ENCODE measurements at regions of chr2 and their contacts with region 1.

Region 1: GRCh38 chr2:174985630-174986029 is 19.6 kb downstream of the CHN1 start:
- ATAC-seq: peak in 3 of 8 experiments; percentile 14 to 51 (median 32)
- H3K4me3 ChIP-seq: peak overlapping the region in 1 of 5 donors; percentile 11
- H3K27ac ChIP-seq: no peak overlapping the region
- H3K4me1 ChIP-seq: peaks cover 3 to 25% of the 10 kb centered on the region in 2 donors

Region 2: DNA sequence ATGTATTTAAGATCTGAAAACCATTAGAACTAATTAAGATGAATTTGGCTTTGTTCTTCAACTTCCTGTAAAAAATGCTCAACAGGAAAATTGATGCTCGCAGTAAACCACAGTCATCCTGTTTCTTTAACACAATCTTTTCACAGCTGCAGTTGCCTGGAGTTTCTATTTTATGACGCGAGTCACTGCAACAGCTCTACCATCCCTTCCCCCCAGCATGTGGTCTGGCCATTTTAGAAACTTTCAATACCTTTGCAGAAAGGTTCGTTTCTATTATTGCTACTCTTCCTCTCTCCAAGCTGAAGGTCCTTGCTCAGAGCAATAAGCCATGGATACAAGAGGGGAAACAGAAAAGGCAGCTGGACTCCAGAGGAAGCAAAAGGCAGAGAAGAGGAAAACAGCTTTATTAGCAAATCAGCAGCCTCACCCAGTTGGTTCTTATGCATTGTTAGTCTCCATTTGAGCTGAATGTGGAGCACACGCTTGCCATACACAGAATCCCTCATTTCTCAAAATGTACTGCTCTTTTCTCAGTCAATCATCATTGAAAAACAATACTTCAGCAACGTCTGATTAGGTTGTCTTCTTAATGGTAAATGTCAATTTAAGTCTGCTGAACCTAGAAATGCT is 391.9 kb before region 1 on chr2:
- in situ Hi-C with region 1: loop called in 1 of 9 experiments (anchors 25 kb)
- ATAC-seq: peak; percentile 42 to 90 (median 58)
- H3K4me3 ChIP-seq: no peak overlapping the region
- H3K27ac ChIP-seq: peak overlapping the region in 1 of 2 donors; percentile 39
- H3K4me1 ChIP-seq: peaks cover 10 to 16% of the 10 kb centered on the region in 2 donors

Region 3: DNA sequence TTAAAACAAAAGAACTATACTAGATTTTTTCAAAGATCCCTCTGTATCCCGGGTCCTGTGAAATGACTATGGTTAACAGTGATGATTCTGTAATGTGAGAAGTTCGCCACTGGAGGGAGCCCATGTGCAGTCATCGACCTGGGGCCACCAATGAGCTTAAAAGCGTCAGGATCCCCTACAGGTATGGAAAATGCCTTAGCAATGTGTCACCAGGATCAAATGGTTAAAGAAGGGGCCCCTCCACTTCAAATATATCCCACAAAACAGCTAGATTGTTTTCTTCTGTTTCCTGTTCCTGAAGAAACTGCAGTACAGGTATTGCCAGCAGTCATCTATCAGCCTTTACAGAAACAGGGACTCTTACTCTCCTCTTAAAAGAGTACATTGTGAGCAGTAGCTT is 236.7 kb before region 1 on chr2:
- in situ Hi-C with region 1: loop called in 6 of 9 experiments (anchors 10 to 25 kb)
- ATAC-seq: peak; percentile 67 to 96 (median 80)
- H3K4me3 ChIP-seq: no peak overlapping the region
- H3K27ac ChIP-seq: no peak overlapping the region
- H3K4me1 ChIP-seq: peaks cover 0 to 2% of the 10 kb centered on the region in 2 donors

Region 4: DNA sequence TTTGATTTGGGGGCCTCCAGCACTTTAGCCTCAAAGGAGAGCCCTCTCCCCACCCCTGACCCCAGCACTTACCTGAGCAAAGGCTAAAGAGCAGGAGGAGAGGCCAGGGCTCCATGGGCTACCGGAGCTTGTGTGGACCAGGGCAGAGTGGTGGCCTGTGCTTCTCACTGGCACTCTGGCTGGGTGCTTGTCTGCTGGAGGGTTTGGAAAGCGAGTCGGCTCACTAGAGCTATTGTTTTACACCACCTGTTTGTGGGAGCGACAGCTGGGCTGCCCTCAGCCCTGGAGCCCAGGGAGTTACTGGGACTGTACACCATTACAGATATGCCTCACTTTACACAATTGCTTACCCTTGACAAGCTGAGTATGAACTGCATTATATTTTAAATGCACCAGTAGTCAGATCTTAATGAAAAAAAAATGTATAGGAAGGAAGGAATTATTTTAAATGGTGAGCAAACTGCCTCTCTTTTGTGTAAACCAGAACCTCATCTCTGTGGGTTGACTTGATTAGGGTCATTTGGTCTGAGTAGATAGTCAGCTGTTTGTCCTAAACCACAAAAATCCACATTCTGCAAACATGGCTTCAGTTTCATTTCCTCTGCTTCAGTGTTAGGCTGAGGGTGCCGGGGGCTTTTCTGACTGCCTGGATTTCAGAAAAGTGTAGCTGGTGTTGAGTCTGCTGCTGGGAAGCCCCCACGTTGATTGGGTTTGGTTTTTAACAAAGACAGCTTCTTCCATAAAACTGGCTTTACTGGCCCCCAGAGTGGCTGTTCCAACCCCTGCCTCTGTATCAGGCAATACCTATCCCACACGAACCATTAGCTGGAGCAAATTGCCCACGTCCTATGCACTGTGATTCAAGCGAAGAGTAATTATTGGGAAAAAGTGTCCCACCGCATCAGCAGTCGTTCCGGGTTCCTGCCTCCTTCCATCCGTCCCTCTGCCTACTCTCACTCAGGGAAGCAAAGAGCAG is 221.1 kb before region 1 on chr2 and contains the start of gene CHRNA1:
- in situ Hi-C with region 1: loop called in 7 of 9 experiments (anchors 10 to 25 kb)
- ATAC-seq: peak in 4 of 8 experiments; percentile 22 to 52 (median 41)
- H3K4me3 ChIP-seq: no peak within 1 kb of the TSS
- H3K27ac ChIP-seq: no peak within 1 kb of the TSS
- H3K4me1 ChIP-seq: peaks cover 0 to 10% of the 10 kb centered on the region in 2 donors
- total RNA-seq, gene CHRNA1: 0.33 to 2.9 (median 0.87) TPM in 6 of 8 experiments, not detected in the others

Region 5: DNA sequence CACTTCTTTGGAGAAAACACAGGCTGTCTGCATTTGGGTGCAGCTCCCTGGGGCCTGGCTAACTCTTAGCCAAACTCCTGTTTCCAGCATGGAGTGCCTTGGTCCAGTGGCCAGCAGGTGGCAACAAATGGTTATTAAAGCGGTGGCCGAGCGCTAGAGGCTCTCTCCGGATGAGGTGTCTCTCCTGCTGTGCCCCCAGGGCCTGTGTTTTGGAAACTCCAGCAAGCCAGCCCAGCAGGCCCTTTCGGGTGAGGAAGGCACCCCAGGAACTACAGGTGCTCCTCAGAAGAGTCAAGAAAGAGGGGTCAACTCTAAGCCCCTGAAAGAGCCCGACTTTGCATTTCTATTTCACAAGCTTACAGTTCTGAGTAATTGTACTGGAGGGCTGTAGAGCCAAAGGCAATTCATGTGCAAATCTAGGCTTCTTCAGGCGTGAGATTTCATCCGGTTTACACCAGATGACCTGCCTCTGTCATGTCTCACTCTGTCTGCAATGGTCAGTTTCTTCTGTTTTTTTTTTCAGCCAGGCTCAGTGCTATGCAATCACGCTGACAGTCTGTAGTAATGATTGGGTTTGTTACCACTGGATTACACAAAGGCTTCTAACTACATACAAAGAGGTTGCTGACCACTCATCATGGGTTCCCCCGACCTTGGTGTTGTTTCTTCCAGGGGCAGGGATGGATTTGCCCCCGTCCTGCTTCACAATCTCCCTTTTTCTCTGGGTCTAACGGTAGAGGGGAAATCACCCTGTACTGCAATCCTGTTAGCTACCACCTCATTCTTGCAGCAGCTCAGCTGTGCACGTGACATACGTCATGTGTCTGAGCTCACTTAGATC is 213.8 kb before region 1 on chr2:
- in situ Hi-C with region 1: loop called in 8 of 9 experiments (anchors 10 to 25 kb)
- ATAC-seq: peak; percentile 92 to 98 (median 94)
- H3K4me3 ChIP-seq: peak overlapping the region; percentile 9 to 32 (median 20)
- H3K27ac ChIP-seq: peak overlapping the region; percentile 92 to 96
- H3K4me1 ChIP-seq: peaks cover 21 to 36% of the 10 kb centered on the region in 2 donors

Measured in motor neuron (in vitro differentiated cells).